Activated B cell treated with CpG ODN at 0.5 μM for 24 hours (primary cell): ENCODE measurements at regions of chr22 and their contacts with region 1.

Region 1: DNA sequence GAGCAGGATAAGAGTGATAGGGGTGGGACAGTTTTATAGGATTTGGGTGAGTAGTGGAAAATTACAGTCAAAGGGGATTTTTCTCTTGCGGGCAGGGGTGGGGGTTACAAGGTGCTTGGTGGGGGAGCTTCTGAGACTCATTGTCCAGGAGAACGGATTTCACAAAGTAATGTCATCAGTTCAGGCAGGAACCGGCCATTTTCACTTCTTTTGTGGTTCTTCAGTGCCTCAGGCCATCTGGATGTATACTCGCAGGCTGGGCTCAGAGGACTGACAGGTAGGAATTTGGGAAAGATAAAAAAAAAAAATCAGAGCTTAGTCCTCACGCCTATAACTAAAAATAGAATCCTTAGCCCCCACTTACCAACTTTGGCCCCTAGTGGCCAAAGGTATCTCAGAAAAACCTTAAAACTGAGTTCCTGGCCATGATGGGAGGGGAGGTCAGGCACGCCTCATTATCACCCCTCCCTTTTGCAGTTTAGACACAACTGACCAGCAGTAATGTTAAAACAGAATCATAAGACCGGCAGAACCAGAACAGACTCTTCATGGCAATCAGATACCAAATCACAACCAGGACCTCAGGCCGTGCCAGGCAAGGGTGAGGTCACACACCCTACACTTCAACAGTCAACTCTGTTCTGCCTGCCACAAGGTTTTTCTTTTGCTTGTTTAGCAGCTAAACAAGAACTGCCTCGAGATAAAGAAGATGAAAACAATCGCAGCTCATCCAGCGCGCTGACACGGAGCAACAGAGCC is 8.9 kb upstream of the APOBEC3G start:
- DNase-seq: no peak
- ATAC-seq: no peak
- H3K4me3 Mint-ChIP-seq: no peak overlapping the region
- H3K27ac Mint-ChIP-seq: no peak overlapping the region
- H3K4me1 Mint-ChIP-seq: peaks cover 54% of the 10 kb centered on the region
- H3K27me3 Mint-ChIP-seq: no peaks in the 10 kb centered on the region
- CTCF ChIP-seq: no peak

Region 2: DNA sequence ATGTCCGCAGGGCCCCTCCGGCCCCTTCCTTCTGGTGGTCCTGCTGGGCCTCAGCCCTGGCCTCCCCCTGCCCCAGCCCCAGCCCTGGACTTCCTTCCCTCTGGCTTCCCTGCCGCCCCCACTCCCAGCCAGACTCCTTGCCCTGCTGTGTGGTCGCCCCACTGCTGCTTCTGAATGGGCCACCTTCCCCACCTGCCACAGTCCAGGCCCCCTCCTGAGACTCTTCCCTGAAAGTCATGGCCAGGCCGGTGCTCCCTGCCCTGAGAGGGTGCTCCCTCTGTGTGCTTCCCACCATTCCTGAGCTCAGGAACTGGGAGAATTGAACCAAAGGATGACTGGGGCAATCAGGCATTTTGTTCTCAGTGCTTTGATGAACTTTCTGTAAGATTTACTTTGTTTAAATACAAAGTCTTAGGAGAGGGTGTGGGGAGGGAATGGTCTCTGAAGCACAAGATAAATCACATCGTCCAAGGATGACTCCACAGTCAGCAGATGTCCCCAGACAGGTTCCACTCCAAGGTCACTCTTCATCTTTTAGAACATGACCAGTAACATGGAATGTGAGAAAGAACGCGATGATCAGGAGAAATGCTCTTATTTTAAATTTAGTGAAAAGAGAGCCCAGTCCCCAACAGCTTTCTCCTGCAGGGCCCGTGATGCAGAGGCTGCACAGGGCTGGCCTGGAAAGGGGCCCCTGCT is 46.5 kb before region 1 on chr22:
- CTCF ChIA-PET with region 1: interaction called, 3 read pairs
- POLR2A ChIA-PET with region 1: interaction called, 19 read pairs
- intact Hi-C with region 1: no loop called
- DNase-seq: no peak
- ATAC-seq: no peak
- H3K4me3 Mint-ChIP-seq: peak overlapping the region; percentile 91
- H3K27ac Mint-ChIP-seq: peak overlapping the region; percentile 96
- H3K4me1 Mint-ChIP-seq: peaks cover 54% of the 10 kb centered on the region
- H3K27me3 Mint-ChIP-seq: no peaks in the 10 kb centered on the region
- CTCF ChIP-seq: no peak

Region 3: DNA sequence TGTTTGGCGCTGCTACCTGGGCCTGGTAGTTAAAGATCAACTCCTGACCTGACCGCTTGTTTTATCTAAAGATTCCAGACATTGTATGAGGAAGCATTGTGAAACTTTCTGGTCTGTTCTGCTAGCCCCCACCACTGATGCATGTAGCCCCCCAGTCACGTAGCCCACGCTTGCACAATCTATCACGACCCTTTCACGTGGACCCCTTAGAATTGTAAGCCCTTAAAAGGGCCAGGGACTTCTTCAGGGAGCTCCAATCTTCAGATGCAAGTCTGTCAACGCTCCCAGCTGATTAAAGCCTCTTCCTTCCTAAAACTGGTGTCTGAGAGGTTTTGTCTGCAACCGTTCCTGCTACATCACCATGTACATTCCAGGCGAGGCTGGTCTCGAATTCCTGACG is 12.6 kb before region 1 on chr22:
- CTCF ChIA-PET with region 1: no interaction called
- POLR2A ChIA-PET with region 1: interaction called, 17 read pairs
- intact Hi-C with region 1: loop called (anchors 2 kb)
- DNase-seq: no peak
- ATAC-seq: no peak
- H3K4me3 Mint-ChIP-seq: no peak overlapping the region
- H3K27ac Mint-ChIP-seq: peak overlapping the region; percentile 56
- H3K4me1 Mint-ChIP-seq: peaks cover 25% of the 10 kb centered on the region
- H3K27me3 Mint-ChIP-seq: no peaks in the 10 kb centered on the region
- CTCF ChIP-seq: no peak

Region 4: DNA sequence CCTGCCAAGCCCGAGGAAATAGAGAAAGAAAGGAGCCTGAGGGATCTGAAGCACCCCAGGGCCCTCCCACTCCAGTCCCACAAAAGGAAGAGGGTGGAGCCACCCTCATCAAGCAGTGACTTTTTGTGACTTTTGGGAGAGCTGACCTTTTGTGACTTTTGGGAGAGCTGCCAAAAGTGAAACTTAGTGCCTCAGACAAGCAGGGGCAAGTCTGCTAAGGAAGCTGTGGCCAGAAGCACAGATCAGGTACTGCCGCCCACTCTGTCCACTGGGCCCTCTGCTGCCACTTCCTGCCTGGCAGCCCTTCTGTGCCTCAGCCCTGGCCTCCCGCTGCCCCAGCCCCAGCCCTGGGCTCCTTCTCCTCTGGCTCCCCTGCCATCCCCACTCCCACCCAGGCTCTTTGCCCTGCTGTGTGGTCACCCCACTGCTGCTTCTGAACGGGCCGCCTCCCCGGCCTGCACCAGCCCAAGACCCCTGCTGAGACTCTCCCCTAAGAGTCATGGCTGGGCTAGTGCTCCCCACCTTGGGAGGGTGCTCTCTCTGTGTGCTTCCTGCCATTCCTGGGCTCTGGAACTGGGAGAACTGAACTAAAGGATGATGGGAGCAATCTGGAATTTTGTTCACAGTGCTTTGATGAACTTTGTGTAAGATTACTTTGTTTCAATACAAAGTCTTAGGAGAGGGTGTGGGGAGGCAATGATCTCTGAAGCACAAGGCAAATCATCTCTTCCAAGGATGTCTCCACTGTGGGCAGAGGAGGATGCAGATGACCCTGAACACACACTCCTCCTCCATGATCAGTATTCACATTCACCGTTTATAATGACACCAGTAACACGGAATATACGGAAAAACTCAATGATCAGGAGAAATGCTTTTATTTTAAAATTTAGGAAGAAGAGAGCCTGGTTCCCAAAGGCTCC is 29.1 kb after region 1 on chr22 and contains the start of gene APOBEC3H:
- CTCF ChIA-PET with region 1: interaction called, 8 read pairs
- POLR2A ChIA-PET with region 1: interaction called, 212 read pairs
- intact Hi-C with region 1: loop called (anchors 1 kb)
- DNase-seq: no peak
- ATAC-seq: no peak
- H3K4me3 Mint-ChIP-seq: peak within 1 kb of the TSS; percentile 48
- H3K27ac Mint-ChIP-seq: peak within 1 kb of the TSS; percentile 94
- H3K4me1 Mint-ChIP-seq: peaks cover 73% of the 10 kb centered on the region
- H3K27me3 Mint-ChIP-seq: no peaks in the 10 kb centered on the region
- CTCF ChIP-seq: no peak
- total RNA-seq, gene APOBEC3H: 1.4 TPM in 2 replicates